ENCODE measurements at regions of chr3 and their contacts with region 1.

Region 1: GRCh38 chr3:27253831-27254230 is 115.4 kb downstream of the NEK10 start:
- DNase-seq: peak; percentile 69
- H3K4me3 Mint-ChIP-seq: no peak overlapping the region
- H3K27ac Mint-ChIP-seq: no peak overlapping the region
- H3K4me1 Mint-ChIP-seq: no peaks in the 10 kb centered on the region
- H3K27me3 Mint-ChIP-seq: no peaks in the 10 kb centered on the region
- CTCF ChIP-seq: peak; percentile 42

Region 2: GRCh38 chr3:27125821-27126501 is 127.9 kb before region 1 on chr3:
- CTCF ChIA-PET with region 1: interaction called, 16 read pairs
- POLR2A ChIA-PET with region 1: no interaction called
- intact Hi-C with region 1: no loop called
- DNase-seq: no peak
- H3K4me3 Mint-ChIP-seq: no peak overlapping the region
- H3K27ac Mint-ChIP-seq: no peak overlapping the region
- H3K4me1 Mint-ChIP-seq: no peaks in the 10 kb centered on the region
- H3K27me3 Mint-ChIP-seq: no peaks in the 10 kb centered on the region
- CTCF ChIP-seq: no peak

Region 3: GRCh38 chr3:27141668-27142067 is 112.2 kb before region 1 on chr3:
- CTCF ChIA-PET with region 1: interaction called, 70 read pairs
- POLR2A ChIA-PET with region 1: no interaction called
- intact Hi-C with region 1: no loop called
- DNase-seq: peak; percentile 8
- H3K4me3 Mint-ChIP-seq: no peak overlapping the region
- H3K27ac Mint-ChIP-seq: no peak overlapping the region
- H3K4me1 Mint-ChIP-seq: no peaks in the 10 kb centered on the region
- H3K27me3 Mint-ChIP-seq: no peaks in the 10 kb centered on the region
- CTCF ChIP-seq: no peak

Region 4: DNA sequence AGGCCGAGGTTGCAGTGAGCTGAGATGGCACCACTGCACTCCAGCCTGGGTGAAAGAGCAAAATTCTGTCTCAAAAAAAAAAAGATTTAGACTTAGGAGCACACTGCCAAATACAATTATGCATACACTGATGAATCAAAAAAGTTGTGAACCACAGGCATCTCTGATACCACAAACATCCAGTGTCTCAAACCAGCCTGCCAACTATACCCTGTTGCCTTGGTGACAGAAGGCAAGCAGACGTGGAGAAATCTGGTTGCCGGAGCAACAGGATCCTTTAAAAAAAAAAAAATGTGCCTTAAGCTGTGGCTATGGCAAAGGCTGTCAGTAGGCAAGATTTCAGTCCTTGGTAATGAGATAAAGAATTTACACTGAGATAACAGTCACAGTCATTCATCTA is 86.9 kb before region 1 on chr3:
- CTCF ChIA-PET with region 1: interaction called, 11 read pairs
- POLR2A ChIA-PET with region 1: no interaction called
- intact Hi-C with region 1: no loop called
- DNase-seq: peak; percentile 59
- H3K4me3 Mint-ChIP-seq: no peak overlapping the region
- H3K27ac Mint-ChIP-seq: no peak overlapping the region
- H3K4me1 Mint-ChIP-seq: no peaks in the 10 kb centered on the region
- H3K27me3 Mint-ChIP-seq: no peaks in the 10 kb centered on the region
- CTCF ChIP-seq: no peak

Region 5: GRCh38 chr3:27275441-27275990 is 21.7 kb after region 1 on chr3:
- CTCF ChIA-PET with region 1: interaction called, 14 read pairs
- POLR2A ChIA-PET with region 1: no interaction called
- intact Hi-C with region 1: no loop called
- DNase-seq: no peak
- H3K4me3 Mint-ChIP-seq: no peak overlapping the region
- H3K27ac Mint-ChIP-seq: no peak overlapping the region
- H3K4me1 Mint-ChIP-seq: no peaks in the 10 kb centered on the region
- H3K27me3 Mint-ChIP-seq: no peaks in the 10 kb centered on the region
- CTCF ChIP-seq: no peak

Region 6: DNA sequence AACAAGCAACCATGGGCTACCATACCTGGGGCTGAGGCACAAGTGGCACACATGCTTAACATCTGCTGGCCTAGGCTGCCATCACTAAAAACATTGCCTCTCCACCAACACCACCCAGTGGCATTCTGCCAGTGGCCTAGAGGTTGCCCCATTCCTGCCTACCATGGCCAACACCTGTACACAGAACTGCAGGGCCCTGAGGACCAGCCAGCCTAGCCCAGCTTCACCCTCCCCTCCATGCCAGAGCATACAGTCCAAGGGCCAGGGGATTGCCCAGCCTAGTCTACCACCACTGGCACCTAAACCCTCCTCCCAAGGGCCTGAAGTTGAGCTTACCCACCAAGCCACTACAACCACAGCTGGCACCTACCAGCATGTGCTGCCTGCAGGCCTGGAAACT is 80.0 kb after region 1 on chr3:
- CTCF ChIA-PET with region 1: no interaction called
- POLR2A ChIA-PET with region 1: no interaction called
- intact Hi-C with region 1: no loop called
- DNase-seq: no peak
- H3K4me3 Mint-ChIP-seq: no peak overlapping the region
- H3K27ac Mint-ChIP-seq: no peak overlapping the region
- H3K4me1 Mint-ChIP-seq: no peaks in the 10 kb centered on the region
- H3K27me3 Mint-ChIP-seq: no peaks in the 10 kb centered on the region
- CTCF ChIP-seq: no peak